ENCODE measurements at regions of chr3 and their contacts with region 1.

Region 1: DNA sequence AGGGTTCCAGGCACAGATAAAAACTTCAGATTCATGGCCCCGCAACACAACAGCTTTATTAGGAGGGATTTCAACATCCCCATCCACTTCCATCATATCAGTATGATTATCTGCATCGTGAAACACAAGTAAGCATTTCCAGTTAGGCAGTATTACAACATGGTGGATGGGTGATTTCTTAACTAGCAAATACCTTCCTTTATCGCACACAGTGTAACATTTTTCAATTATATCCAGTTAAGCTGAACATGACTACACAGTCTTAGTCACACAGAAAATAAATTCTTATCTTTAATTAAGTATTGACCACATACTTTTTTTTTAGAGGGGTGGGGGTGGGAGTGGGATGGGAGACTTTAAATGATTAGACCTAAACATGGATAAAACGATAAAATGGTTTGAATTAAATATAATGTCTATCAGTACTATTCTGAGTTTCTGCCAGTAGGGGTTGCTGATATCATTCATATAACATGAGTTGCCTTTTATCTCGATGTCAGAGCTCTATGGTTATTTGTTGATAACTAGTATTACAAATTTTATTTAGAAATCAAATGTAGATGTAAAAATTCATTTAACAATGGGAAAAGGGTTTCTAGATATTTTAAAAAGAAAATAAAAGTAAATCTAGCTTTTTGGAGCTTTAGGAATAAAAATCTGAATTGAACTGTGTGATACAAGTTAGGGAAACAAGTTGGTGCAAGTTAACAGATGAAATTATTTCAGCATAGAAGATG is 146.6 kb downstream of the TBL1XR1 start:
- DNase-seq: no peak
- ATAC-seq: peak; percentile 77
- H3K4me3 Mint-ChIP-seq: no peak overlapping the region
- H3K27ac Mint-ChIP-seq: peak overlapping the region; percentile 56
- H3K4me1 Mint-ChIP-seq: peaks cover 14% of the 10 kb centered on the region
- H3K27me3 Mint-ChIP-seq: no peaks in the 10 kb centered on the region
- CTCF ChIP-seq: peak; percentile 69

Region 2: DNA sequence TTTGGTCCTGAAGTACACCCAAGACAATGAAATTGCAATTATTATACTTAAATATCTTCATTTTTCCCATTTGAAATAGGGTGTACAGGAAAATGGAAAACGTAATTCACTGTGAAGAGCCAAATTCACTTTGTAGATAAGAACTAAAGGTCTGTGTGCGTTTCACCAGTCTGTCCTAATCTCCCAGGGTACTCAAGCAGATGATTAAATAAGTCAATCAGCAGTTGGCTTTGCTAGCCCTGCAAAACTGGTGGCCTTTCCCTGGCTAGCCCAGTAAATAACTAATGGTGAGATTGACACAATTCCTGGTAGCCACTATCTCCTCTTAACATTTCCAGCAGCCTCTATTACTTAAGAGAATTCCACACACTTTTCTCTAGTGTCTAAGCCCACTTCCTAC is 242.7 kb before region 1 on chr3:
- CTCF ChIA-PET with region 1: no interaction called
- POLR2A ChIA-PET with region 1: no interaction called
- intact Hi-C with region 1: no loop called
- DNase-seq: no peak
- ATAC-seq: no peak
- H3K4me3 Mint-ChIP-seq: no peak overlapping the region
- H3K27ac Mint-ChIP-seq: no peak overlapping the region
- H3K4me1 Mint-ChIP-seq: no peaks in the 10 kb centered on the region
- H3K27me3 Mint-ChIP-seq: no peaks in the 10 kb centered on the region
- CTCF ChIP-seq: no peak

Region 3: DNA sequence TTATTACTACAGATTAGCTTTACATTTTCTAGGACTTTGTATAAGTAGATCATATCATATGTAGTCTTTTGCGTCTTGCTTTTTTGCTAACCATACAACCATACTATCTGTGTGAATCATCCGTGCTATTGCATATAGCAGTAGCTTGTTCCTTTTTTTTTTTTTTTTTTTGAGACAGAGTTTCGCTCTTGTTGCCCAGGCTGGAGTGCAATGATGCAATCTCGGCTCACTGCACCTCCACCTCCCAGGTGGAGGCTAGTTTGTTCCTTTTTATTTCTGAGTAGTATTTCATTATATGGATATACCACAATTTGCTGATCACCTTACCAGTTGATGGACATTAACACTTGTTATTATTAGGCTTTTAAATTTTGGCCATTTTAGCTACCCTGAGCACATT is 201.1 kb after region 1 on chr3:
- CTCF ChIA-PET with region 1: no interaction called
- POLR2A ChIA-PET with region 1: interaction called, 3 read pairs
- intact Hi-C with region 1: loop called (anchors 5 kb)
- DNase-seq: no peak
- ATAC-seq: peak; percentile 64
- H3K4me3 Mint-ChIP-seq: no peak overlapping the region
- H3K27ac Mint-ChIP-seq: peak overlapping the region; percentile 79
- H3K4me1 Mint-ChIP-seq: peaks cover 36% of the 10 kb centered on the region
- H3K27me3 Mint-ChIP-seq: no peaks in the 10 kb centered on the region
- CTCF ChIP-seq: no peak

Region 4: DNA sequence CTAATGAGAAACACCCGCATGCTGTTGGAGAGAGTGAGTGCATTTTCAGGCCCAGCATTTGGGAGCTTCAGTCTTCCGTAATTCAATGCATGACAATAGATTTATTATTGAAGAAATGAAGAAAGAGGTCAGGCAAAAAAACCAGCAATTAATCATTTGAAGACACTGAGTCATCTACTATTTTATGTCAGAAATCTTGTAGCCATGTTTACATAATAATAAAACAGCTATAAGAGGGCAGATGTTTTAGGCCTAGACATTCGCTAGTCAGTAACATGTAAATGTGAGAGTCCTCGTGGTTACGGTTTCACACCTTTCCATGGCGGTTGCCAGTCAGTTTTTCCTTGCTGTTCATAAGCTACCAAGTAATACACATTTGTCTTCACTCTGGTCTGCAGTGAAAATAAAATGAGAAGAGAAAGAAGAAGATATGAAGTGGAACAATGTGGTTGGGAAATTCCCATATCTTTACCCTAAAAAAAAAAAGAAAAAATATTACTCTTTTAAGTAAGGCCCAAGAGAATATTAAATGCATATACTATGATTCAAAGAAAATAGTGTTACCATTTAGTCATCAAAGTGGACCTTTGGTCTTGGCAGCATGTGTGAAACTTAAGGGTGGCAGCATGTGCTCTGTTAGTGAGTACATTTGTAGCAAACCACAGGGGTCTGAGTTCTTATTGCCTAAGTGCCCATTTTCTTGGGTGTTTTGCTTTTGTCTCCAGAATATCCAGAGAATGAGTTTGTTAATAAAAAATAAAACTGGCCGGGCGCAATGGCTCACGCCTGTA is 287.1 kb after region 1 on chr3:
- CTCF ChIA-PET with region 1: no interaction called
- POLR2A ChIA-PET with region 1: interaction called, 3 read pairs
- intact Hi-C with region 1: loop called (anchors 1 kb)
- DNase-seq: no peak
- ATAC-seq: peak; percentile 82
- H3K4me3 Mint-ChIP-seq: peak overlapping the region; percentile 67
- H3K27ac Mint-ChIP-seq: peak overlapping the region; percentile 98
- H3K4me1 Mint-ChIP-seq: peaks cover 61% of the 10 kb centered on the region
- H3K27me3 Mint-ChIP-seq: no peaks in the 10 kb centered on the region
- CTCF ChIP-seq: no peak

Region 5: DNA sequence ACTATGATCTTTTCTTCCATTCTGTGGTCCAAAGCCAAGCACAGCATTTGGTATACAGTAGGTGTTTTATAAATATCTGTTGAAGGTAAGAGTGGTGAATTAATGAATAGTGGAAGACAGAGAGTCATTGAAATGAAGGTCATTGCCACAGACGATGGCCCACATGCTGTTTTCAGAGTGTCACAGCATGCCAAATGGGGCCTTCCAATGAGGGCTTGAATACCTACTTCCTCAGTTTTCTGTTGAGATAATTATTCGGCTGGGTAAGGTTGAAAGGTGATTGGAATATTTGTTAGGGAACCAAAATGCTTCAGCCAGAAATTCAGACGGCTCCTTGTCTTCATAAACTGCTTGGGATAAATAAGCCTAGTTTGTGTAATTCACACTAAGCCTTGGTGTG is 351.9 kb after region 1 on chr3:
- CTCF ChIA-PET with region 1: no interaction called
- POLR2A ChIA-PET with region 1: no interaction called
- intact Hi-C with region 1: no loop called
- DNase-seq: no peak
- ATAC-seq: no peak
- H3K4me3 Mint-ChIP-seq: no peak overlapping the region
- H3K27ac Mint-ChIP-seq: no peak overlapping the region
- H3K4me1 Mint-ChIP-seq: no peaks in the 10 kb centered on the region
- H3K27me3 Mint-ChIP-seq: no peaks in the 10 kb centered on the region
- CTCF ChIP-seq: no peak

Region 6: GRCh38 chr3:177652556-177653291 is 602.1 kb after region 1 on chr3:
- CTCF ChIA-PET with region 1: no interaction called
- POLR2A ChIA-PET with region 1: no interaction called
- intact Hi-C with region 1: loop called (anchors 5 kb)
- DNase-seq: no peak
- ATAC-seq: no peak
- H3K4me3 Mint-ChIP-seq: no peak overlapping the region
- H3K27ac Mint-ChIP-seq: no peak overlapping the region
- H3K4me1 Mint-ChIP-seq: peaks cover 9% of the 10 kb centered on the region
- H3K27me3 Mint-ChIP-seq: no peaks in the 10 kb centered on the region
- CTCF ChIP-seq: no peak

Region 7: DNA sequence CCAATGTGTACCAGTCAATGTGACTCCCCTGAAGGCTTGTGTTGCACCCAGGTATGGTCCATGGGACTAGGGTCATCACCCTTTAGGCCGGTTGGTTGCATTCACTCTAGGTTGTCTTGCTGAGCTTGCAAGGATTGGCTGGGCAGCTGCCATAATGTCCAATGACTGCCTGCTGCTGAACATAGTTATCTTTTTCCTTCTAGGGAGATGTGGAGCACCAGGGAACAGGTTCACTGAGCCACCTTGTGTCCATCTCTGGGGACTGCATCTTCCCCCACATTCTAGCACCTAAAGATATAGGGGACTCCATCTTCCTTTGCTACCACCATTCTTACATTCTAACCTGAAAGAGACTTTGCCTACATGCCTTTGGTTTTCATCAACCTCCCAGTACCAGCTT is 727.0 kb after region 1 on chr3:
- CTCF ChIA-PET with region 1: interaction called, 23 read pairs
- POLR2A ChIA-PET with region 1: no interaction called
- intact Hi-C with region 1: loop called (anchors 1 kb)
- DNase-seq: no peak
- ATAC-seq: peak; percentile 75
- H3K4me3 Mint-ChIP-seq: no peak overlapping the region
- H3K27ac Mint-ChIP-seq: no peak overlapping the region
- H3K4me1 Mint-ChIP-seq: peaks cover 18% of the 10 kb centered on the region
- H3K27me3 Mint-ChIP-seq: no peaks in the 10 kb centered on the region
- CTCF ChIP-seq: no peak

Region 8: DNA sequence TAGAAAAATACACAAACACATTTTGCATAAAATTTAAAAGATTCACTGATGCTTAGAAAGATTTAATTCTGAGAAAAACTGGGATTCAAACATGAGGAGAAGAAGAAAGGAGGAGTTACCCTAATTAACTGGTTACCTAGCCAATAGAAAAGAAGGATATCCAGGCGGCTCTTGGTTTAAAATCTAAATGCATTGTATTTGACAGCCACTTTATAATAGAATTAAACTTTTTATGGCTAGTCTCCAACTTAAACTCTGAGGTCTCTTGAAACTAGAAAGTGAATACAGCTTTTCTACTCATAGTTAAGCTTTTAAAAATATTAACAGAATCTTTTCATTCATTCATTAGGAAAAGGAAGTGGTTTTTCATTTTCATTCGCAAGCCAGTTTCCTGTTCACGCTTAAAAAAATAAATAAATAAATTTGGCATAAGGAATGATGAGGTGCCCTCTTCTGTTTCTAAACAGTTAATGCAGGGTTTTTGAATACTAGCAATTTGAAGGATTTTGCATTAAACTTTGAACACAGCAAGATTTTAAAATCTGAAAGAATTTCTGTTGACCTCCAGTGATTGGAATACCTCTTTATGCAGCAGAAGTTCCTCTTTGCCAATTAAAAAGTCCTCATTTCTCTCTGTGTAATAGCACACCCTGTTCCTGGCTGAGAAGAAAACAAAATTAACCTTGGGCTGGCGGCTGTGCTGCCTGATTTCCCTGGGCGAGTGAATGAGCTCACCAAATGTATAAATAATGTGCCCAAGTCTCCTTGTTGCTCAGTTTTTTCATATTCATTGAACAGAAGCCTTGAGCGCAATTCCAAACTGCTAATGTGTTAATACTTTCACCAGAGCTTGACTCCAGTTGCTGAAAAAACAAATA is 1915.9 kb after region 1 on chr3:
- CTCF ChIA-PET with region 1: interaction called, 3 read pairs
- POLR2A ChIA-PET with region 1: no interaction called
- intact Hi-C with region 1: loop called (anchors 5 kb)
- DNase-seq: no peak
- ATAC-seq: no peak
- H3K4me3 Mint-ChIP-seq: peak overlapping the region; percentile 76
- H3K27ac Mint-ChIP-seq: peak overlapping the region; percentile 81
- H3K4me1 Mint-ChIP-seq: peaks cover 46% of the 10 kb centered on the region
- H3K27me3 Mint-ChIP-seq: no peaks in the 10 kb centered on the region
- CTCF ChIP-seq: no peak